Ascending aorta (tissue), 2 donors: ENCODE measurements at regions of chr3 and their contacts with region 1.

Region 1: DNA sequence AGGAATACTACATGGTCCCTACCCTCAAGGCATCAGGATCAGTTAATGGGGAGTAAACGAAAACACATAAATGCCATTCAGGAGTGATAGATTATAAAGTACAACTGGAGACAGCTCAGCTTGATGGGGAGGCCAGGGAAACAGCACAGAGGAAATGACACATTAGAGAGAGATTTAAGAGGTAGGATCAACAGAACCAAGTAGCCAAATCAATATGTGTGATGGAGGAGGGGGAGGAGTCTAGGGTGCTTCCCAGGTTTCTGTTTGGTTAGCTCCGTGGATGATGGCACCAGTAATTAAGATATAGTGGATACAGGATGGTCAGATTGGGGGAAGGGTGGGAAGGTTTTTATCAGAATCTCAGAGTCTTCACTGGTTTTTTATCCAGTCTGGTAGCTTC is 229.5 kb upstream of the ROPN1 start:
- DNase-seq: no peak
- H3K4me3 ChIP-seq: no peak overlapping the region
- H3K27ac ChIP-seq: no peak overlapping the region
- H3K4me1 ChIP-seq: no peaks in the 10 kb centered on the region
- H3K27me3 ChIP-seq: no peaks in the 10 kb centered on the region
- CTCF ChIP-seq: no peak

Region 2: DNA sequence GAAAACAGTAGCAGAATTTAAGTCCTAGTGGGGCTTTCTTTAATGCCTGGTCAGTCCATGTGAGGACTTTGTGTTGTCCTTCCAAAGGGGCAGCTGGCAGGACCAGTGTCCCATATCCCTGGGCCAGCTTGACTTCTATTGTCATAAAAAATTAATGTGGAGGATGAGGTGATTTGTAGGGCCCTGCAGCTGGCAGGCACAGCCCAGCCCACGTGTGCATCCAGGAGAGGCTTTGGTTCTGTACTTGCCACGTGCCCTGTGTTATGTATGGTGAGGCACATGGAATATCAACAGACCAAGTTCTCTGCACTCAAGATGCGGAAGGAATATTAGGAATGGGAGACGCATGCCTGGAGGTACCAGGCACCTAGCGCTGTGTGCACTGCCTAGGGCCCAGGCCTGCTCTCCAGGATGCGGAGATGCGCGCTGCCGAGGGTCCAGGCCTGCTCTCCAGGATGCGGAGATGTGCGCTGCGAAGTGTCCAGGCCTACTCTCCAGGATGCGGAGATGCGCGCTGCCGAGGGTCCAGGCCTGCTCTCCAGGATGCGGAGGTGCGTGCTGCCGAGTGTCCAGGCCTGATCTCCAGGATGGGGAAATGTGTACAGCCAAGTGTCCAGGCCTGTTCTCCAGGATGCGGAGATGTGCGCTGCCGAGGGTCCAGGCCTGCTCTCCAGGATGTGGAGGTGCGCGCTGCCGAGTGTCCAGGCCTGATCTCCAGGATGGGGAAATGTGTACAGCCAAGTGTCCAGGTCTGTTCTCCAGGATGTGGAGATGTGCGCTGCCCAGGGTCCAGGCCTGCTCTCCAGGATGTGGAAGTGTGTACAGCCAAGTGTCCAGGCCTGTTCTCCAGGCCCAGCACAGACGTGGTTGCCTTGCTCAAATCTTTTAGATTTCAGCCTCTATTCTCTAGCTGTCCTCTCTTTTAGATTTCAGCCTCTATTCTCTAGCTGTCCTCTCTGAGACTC is 46.2 kb before region 1 on chr3:
- intact Hi-C with region 1: loop called (anchors 5 kb)
- DNase-seq: no peak
- H3K4me3 ChIP-seq: no peak overlapping the region
- H3K27ac ChIP-seq: no peak overlapping the region
- H3K4me1 ChIP-seq: peaks cover 0 to 12% of the 10 kb centered on the region in 2 donors
- H3K27me3 ChIP-seq: no peaks in the 10 kb centered on the region
- CTCF ChIP-seq: no peak

Region 3: GRCh38 chr3:124202754-124203153 is 18.7 kb before region 1 on chr3:
- intact Hi-C with region 1: no loop called
- DNase-seq: peak in 1 of 2 donors; percentile 72
- H3K4me3 ChIP-seq: no peak overlapping the region
- H3K27ac ChIP-seq: peak overlapping the region; percentile 60 to 78
- H3K4me1 ChIP-seq: peaks cover 19 to 62% of the 10 kb centered on the region in 2 donors
- H3K27me3 ChIP-seq: no peaks in the 10 kb centered on the region
- CTCF ChIP-seq: no peak